AG04450 (cell line): ENCODE measurements at regions of chr6 and their contacts with region 1.

Region 1: GRCh38 chr6:73515204-73515655 is 5.6 kb downstream of the EEF1A1 start:
- DNase-seq: no peak
- H3K4me3 ChIP-seq: no peak overlapping the region
- H3K27ac ChIP-seq: peak overlapping the region; percentile 63
- H3K27me3 ChIP-seq: no peaks in the 10 kb centered on the region
- CTCF ChIP-seq: no peak

Region 2: GRCh38 chr6:72464791-72465691 is 1050.2 kb before region 1 on chr6:
- CTCF ChIA-PET with region 1: no interaction called
- POLR2A ChIA-PET with region 1: no interaction called
- DNase-seq: peak; percentile 23
- H3K4me3 ChIP-seq: no peak overlapping the region
- H3K27ac ChIP-seq: no peak overlapping the region
- H3K27me3 ChIP-seq: no peaks in the 10 kb centered on the region
- CTCF ChIP-seq: no peak

Region 3: GRCh38 chr6:73200735-73201134 is 314.5 kb before region 1 on chr6:
- CTCF ChIA-PET with region 1: no interaction called
- POLR2A ChIA-PET with region 1: no interaction called
- DNase-seq: no peak
- H3K4me3 ChIP-seq: no peak overlapping the region
- H3K27ac ChIP-seq: no peak overlapping the region
- H3K27me3 ChIP-seq: no peaks in the 10 kb centered on the region
- CTCF ChIP-seq: no peak

Region 4: DNA sequence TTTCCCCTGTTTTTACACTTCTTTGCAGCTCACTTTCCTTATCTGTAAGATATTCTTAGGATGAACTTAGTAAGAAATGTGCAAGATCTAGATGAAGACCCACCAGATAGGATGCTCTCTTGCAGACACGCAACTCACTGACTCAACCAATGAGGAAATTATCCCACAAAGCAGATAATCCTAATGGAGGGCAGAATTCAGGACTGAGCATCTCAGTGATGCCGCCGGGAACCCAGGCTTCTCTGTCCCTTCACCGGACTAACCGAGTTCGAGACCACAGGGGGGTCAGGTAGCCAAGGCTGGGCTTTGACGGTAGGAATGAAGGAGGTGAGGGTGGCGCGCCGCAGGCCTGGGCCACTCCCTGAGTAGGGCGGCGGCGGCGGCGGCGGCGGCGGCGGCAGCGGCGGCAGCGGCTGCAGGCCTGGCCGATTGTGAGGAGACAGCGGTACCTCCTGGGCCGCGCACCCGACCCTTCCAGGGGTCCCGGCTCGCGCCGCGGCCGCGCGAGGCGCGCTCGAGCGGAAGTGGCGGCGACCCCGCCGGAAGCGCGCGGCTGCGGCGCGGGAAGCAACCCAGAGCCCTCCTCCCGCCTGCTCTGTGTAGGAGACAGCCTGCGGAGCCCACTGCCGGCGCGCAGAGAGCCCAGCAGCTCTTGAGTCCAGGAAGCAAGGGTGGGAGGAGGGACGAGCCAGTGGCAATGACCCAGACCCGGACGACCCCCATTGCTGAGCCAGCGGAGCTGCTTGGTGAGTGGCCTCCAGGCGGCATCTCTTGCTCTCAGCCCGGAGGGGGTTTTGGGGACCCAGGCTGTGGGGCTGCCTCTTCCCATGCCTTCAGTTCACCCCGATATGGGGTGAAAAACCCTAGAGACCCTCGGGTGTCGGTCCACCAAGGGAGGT is 252.3 kb before region 1 on chr6 and contains the start of gene KHDC1:
- CTCF ChIA-PET with region 1: no interaction called
- POLR2A ChIA-PET with region 1: interaction called, 10 read pairs
- DNase-seq: peak; percentile 7
- H3K4me3 ChIP-seq: peak within 1 kb of the TSS; percentile 84
- H3K27ac ChIP-seq: peak within 1 kb of the TSS; percentile 52
- H3K27me3 ChIP-seq: no peaks in the 10 kb centered on the region
- CTCF ChIP-seq: no peak; the same call in 1 of the 2 replicates
- polyA plus RNA-seq, gene KHDC1: 5.9 and 6.5 TPM in 2 replicates

Region 5: GRCh38 chr6:73580247-73581149 is 65.3 kb after region 1 on chr6:
- CTCF ChIA-PET with region 1: no interaction called
- POLR2A ChIA-PET with region 1: interaction called, 142 read pairs
- DNase-seq: peak; percentile 94
- H3K4me3 ChIP-seq: peak overlapping the region; percentile 50
- H3K27ac ChIP-seq: peak overlapping the region; percentile 100
- H3K27me3 ChIP-seq: no peaks in the 10 kb centered on the region
- CTCF ChIP-seq: peak; percentile 54

Region 6: GRCh38 chr6:73610444-73611275 is 95.4 kb after region 1 on chr6:
- CTCF ChIA-PET with region 1: interaction called, 19 read pairs
- POLR2A ChIA-PET with region 1: interaction called, 28 read pairs
- DNase-seq: no peak
- H3K4me3 ChIP-seq: no peak overlapping the region
- H3K27ac ChIP-seq: no peak overlapping the region
- H3K27me3 ChIP-seq: no peaks in the 10 kb centered on the region
- CTCF ChIP-seq: peak; percentile 66

Region 7: GRCh38 chr6:73653571-73654424 is 138.6 kb after region 1 on chr6 and contains the start of gene SLC17A5:
- CTCF ChIA-PET with region 1: interaction called, 10 read pairs
- POLR2A ChIA-PET with region 1: interaction called, 11 read pairs
- DNase-seq: peak; percentile 75
- H3K4me3 ChIP-seq: peak within 1 kb of the TSS; percentile 73
- H3K27ac ChIP-seq: peak within 1 kb of the TSS; percentile 88
- H3K27me3 ChIP-seq: no peaks in the 10 kb centered on the region
- CTCF ChIP-seq: no peak
- polyA plus RNA-seq, gene SLC17A5: 25.9 and 34.0 TPM in 2 replicates